ENCODE measurements at regions of chr2 and their contacts with region 1.

Region 1: DNA sequence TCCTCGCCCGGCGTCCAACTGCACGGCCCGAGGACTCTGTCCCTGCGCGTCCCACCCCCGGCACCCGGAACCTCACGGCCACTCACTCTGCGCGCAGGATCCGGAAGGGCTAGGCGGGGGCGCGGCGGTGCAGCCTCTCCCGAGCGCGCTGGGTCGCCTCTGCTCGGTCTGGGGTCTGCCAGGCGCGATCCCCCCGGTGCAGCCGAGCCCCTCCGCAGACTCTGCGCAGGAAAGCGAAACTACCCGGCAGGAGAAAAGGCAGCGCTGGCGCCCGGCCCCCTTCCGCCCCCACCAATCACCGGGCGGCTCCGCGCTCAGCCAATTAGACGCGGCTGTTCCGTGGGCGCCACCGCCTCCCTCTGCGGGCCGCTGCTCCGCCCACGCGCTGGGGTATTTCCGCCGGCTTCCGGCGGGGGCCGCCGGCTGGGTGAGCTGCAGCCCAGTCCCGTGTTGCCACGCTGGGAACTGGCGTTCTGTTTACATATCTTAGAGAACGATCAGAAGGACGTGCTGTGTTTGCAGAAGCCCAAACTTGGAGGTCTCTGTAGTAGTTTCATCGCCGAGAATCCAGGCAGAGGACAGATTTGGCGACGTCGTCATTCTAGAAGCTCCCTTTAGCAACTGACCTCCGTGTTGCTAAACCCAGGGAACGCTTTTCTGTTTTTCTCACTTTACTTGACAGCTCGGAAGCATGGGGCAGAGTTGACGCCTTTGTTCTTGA is at the start of gene STAT1:
- DNase-seq: peak; percentile 75
- ATAC-seq: peak; percentile 86
- H3K4me3 ChIP-seq: peak within 1 kb of the TSS; percentile 92
- H3K27ac ChIP-seq: peak within 1 kb of the TSS; percentile 97
- H3K4me1 ChIP-seq: peaks cover 27% of the 10 kb centered on the region
- H3K27me3 ChIP-seq: no peaks in the 10 kb centered on the region
- CTCF ChIP-seq: peak in 1 of 3 experiments; percentile 1; a peak in 1 of 6 replicates
- EP300 ChIP-seq: peak; percentile 75 to 100
- POLR2A ChIP-seq: peak; percentile 100
- RAD21 ChIP-seq: peak; percentile 8; the same call in 1 of the 2 replicates
- polyA plus RNA-seq, gene STAT1: 81.8 to 102 TPM

Region 2: GRCh38 chr2:190835303-190835930 is 178.7 kb before region 1 on chr2:
- CTCF ChIA-PET with region 1: no interaction called
- POLR2A ChIA-PET with region 1: no interaction called
- RAD21 ChIA-PET with region 1: no interaction called
- SMC1A ChIA-PET with region 1: no interaction called
- in situ Hi-C with region 1: no loop called
- intact Hi-C with region 1: no loop called
- DNase-seq: no peak
- ATAC-seq: no peak
- H3K4me3 ChIP-seq: no peak overlapping the region
- H3K27ac ChIP-seq: no peak overlapping the region
- H3K4me1 ChIP-seq: no peaks in the 10 kb centered on the region
- H3K27me3 ChIP-seq: no peaks in the 10 kb centered on the region
- CTCF ChIP-seq: no peak
- EP300 ChIP-seq: no peak
- POLR2A ChIP-seq: no peak
- RAD21 ChIP-seq: no peak

Region 3: GRCh38 chr2:190880378-190881073 is 133.6 kb before region 1 on chr2 and contains the start of gene GLS:
- CTCF ChIA-PET with region 1: no interaction called
- POLR2A ChIA-PET with region 1: interaction called, 28 read pairs
- RAD21 ChIA-PET with region 1: interaction called, 18 read pairs
- SMC1A ChIA-PET with region 1: interaction called, 23 read pairs
- in situ Hi-C with region 1: no loop called
- intact Hi-C with region 1: loop called (anchors 5 kb)
- DNase-seq: peak; percentile 86
- ATAC-seq: peak; percentile 83
- H3K4me3 ChIP-seq: peak within 1 kb of the TSS; percentile 94
- H3K27ac ChIP-seq: peak within 1 kb of the TSS; percentile 95
- H3K4me1 ChIP-seq: peaks cover 6% of the 10 kb centered on the region; the same call in 1 of the 2 replicates
- H3K27me3 ChIP-seq: no peaks in the 10 kb centered on the region
- CTCF ChIP-seq: no peak
- EP300 ChIP-seq: 0 out of 4 replicates have a peak, but pooled peaks of 1 of the 2 experiments have one; percentile 20
- POLR2A ChIP-seq: peak; percentile 99
- RAD21 ChIP-seq: no peak
- polyA plus RNA-seq, gene GLS: 23.7 to 30.5 TPM

Region 4: DNA sequence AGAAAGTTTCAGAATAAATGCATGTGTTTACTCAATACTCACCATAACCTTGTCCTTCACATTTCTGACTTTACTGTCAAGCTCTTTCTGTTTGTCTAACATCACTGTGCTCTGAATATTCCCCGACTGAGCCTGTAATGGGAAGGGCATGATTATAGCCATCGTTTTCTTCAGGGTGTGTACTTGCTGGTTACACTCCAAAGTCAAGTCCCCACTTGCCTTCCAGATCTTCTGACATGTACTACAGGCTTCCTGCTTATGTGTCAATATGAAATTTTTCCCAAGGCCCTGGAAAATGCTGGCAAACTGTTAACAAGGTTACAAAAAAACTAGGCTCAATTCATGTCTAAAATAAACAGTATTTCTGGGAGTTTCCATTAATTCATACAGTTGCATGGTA is 13.1 kb before region 1 on chr2:
- CTCF ChIA-PET with region 1: interaction called, 4 read pairs
- POLR2A ChIA-PET with region 1: interaction called, 10 read pairs
- RAD21 ChIA-PET with region 1: no interaction called
- SMC1A ChIA-PET with region 1: interaction called, 8 read pairs
- in situ Hi-C with region 1: no loop called
- intact Hi-C with region 1: no loop called
- DNase-seq: no peak
- ATAC-seq: no peak
- H3K4me3 ChIP-seq: no peak overlapping the region
- H3K27ac ChIP-seq: no peak overlapping the region
- H3K4me1 ChIP-seq: peaks cover 2% of the 10 kb centered on the region; the same call in 1 of the 2 replicates
- H3K27me3 ChIP-seq: no peaks in the 10 kb centered on the region
- CTCF ChIP-seq: no peak
- EP300 ChIP-seq: no peak
- POLR2A ChIP-seq: peak; percentile 60; the same call in 1 of the 2 replicates
- RAD21 ChIP-seq: no peak

Region 5: DNA sequence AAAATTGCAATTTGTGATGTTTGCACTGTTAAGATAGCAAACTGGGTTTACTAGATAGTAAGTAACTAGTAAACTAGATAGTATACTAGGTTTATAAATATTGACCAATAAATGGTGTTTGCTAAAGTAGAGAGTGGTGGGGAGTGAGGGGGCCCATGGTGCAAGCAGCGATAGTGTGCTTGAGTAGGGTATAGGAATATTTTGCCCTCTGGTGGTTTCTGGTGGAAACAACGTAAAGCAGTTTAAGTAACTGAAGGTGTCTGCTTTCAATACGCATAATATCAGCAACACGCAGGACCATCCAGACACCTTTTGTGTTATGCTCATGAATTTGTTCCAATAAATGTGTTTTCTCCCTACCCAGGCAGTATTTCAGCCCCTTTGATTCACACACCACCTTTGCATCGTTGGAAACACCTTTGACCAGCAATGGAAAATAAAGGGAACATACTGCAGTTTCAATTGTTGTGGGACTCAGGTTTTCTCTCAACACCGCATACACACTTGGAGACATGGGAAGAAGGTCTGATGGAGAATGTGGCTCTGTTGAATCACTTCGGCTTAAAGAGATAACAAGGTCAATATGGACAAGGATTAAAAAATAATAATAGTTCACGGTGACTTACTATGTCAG is 16.5 kb after region 1 on chr2:
- CTCF ChIA-PET with region 1: interaction called, 13 read pairs
- POLR2A ChIA-PET with region 1: interaction called, 75 read pairs
- RAD21 ChIA-PET with region 1: interaction called, 10 read pairs
- SMC1A ChIA-PET with region 1: interaction called, 17 read pairs
- in situ Hi-C with region 1: no loop called
- intact Hi-C with region 1: no loop called
- DNase-seq: no peak
- ATAC-seq: peak; percentile 96
- H3K4me3 ChIP-seq: no peak overlapping the region
- H3K27ac ChIP-seq: no peak overlapping the region
- H3K4me1 ChIP-seq: no peaks in the 10 kb centered on the region
- H3K27me3 ChIP-seq: no peaks in the 10 kb centered on the region
- CTCF ChIP-seq: peak; percentile 62 to 73 (median 69)
- EP300 ChIP-seq: no peak
- POLR2A ChIP-seq: no peak
- RAD21 ChIP-seq: peak; percentile 65